ENCODE measurements at regions of chr2 and their contacts with region 1.

Region 1: GRCh38 chr2:70647873-70648481 is 94.4 kb upstream of the TGFA start:
- DNase-seq: peak; percentile 70
- H3K27ac ChIP-seq: no peak overlapping the region
- CTCF ChIP-seq: peak; percentile 99

Region 2: DNA sequence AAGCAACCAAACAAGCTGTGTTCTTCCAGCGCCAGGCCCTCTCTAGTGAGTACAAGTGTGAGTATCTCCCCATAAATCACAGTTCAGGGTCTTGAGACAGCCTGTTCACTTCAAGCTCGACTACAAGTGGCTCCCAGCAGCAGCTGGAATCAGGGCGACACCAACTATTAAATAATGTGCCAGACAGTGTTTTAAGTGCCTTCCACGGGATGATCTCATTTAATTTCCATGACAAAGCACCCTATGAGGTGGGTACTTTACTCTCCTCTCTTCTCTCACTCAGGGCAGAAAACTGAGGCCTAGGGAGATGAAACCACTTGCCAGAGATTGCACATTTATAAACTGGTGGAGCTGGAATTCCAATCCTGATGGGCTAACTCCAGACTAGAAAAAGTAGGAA is 343.5 kb before region 1 on chr2:
- CTCF ChIA-PET with region 1: interaction called, 13 read pairs
- POLR2A ChIA-PET with region 1: no interaction called
- DNase-seq: no peak
- H3K27ac ChIP-seq: no peak overlapping the region
- CTCF ChIP-seq: no peak

Region 3: DNA sequence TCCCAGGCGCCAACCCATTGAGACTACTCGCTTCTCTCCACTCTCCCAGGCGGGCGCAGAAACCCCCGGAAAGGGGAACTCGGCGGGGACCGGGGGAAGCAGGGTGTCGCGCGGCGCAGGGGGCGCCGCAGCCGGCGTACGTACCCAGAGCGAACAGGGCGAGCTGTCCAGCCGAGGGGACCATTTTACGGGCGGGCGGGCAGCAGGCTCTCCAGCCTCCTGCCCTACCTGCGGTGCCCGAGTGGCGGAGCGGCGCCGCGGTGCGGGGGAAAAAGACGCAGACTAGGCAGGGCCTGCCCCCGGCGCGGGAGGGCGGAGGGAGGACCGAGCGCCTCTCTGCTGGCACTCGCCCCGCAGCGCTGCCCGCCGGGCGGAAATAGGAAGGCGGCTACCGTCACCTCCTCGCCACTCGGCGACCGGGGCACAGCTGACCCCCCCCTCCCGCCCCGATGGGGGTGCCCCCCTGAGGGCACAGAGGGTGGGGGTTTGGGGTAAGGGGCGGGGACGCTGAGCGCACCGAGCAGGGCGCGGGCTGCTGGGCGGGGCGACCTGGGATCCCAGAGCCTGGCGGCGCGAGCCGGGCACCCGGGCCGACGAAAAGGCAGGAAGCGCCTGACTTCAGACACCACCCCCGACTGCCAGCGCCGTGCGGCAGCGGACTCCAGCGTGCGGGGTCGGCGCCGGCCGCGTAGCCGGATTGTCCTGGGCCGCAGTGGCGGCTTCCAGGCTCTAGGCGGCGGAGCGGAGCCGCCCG is 94.2 kb before region 1 on chr2 and contains the start of gene TGFA:
- CTCF ChIA-PET with region 1: no interaction called
- POLR2A ChIA-PET with region 1: no interaction called
- DNase-seq: peak; percentile 83
- H3K27ac ChIP-seq: peak within 1 kb of the TSS; percentile 96
- CTCF ChIP-seq: peak; percentile 88

Measured in RWPE1 (cell line).